ENCODE measurements at regions of chr13 and their contacts with region 1.

Region 1: DNA sequence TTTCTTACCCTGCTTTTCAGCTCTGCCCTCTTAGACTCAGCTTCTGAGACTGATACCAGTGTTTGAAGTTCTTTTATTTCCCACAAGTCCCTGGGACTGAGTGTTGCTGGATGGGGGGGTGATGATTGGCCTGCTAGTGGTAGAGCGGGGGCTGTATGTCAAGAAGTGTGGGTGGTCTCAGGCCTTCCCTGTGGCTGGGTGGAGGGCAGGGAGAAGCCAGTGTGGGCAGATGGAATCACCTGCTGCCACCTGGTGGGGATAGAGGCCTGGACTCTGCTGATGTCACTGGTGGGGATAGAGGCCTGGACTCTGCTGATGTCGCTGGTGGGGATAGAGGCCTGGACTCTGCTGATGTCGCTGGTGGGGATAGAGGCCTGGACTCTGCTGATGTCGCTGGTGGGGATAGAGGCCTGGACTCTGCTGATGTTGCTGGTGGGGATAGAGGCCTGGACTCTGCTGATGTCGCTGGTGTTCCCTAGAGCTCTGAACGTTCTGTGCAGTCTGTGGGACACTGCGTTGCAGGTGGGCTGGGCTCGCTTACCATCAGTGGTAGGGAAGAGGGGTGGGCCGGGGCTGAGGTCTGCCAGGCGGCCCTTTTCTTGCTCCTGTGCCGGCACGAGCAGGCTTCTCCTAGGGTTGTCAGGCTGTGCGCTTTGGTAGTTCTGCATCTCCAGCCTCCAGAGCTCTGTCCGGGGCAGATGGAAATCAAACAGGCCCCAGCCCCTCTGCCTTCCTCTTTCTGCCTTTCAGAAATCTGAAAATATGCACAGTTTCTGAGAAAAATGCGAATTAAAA is 101.3 kb downstream of the ARHGEF7 start:
- DNase-seq: peak in 1 of 3 donors; percentile 57
- ATAC-seq: peak; percentile 26 to 60 (median 52)
- H3K4me3 ChIP-seq: no peak overlapping the region
- H3K27ac ChIP-seq: peak overlapping the region in 2 of 3 donors; percentile 73 to 75
- H3K4me1 ChIP-seq: peaks cover 0 to 24% (median 8%) of the 10 kb centered on the region in 4 donors
- H3K27me3 ChIP-seq: no peaks in the 10 kb centered on the region
- CTCF ChIP-seq: peak; percentile 30 to 46 (median 40)
- POLR2A ChIP-seq: no peak

Region 2: GRCh38 chr13:111066544-111066943 is 149.8 kb before region 1 on chr13:
- intact Hi-C with region 1: loop called in 1 of 2 experiments (anchors 5 kb)
- DNase-seq: no peak
- ATAC-seq: peak; percentile 5 to 29 (median 22)
- H3K4me3 ChIP-seq: peak overlapping the region in 2 of 3 donors; percentile 61 to 63
- H3K27ac ChIP-seq: peak overlapping the region in 2 of 3 donors; percentile 80 to 87
- H3K4me1 ChIP-seq: no peaks in the 10 kb centered on the region
- H3K27me3 ChIP-seq: no peaks in the 10 kb centered on the region
- CTCF ChIP-seq: no peak
- POLR2A ChIP-seq: no peak

Region 3: GRCh38 chr13:111165241-111166010 is 50.9 kb before region 1 on chr13:
- intact Hi-C with region 1: loop called in 1 of 2 experiments (anchors 10 kb)
- DNase-seq: no peak
- ATAC-seq: peak in 1 of 4 donors; percentile 57
- H3K4me3 ChIP-seq: no peak overlapping the region
- H3K27ac ChIP-seq: no peak overlapping the region
- H3K4me1 ChIP-seq: no peaks in the 10 kb centered on the region
- H3K27me3 ChIP-seq: no peaks in the 10 kb centered on the region
- CTCF ChIP-seq: no peak
- POLR2A ChIP-seq: no peak

Region 4: GRCh38 chr13:111474136-111475002 is 258.0 kb after region 1 on chr13:
- intact Hi-C with region 1: no loop called
- DNase-seq: peak in 1 of 3 donors; percentile 44
- ATAC-seq: peak; percentile 77 to 84 (median 82)
- H3K4me3 ChIP-seq: no peak overlapping the region
- H3K27ac ChIP-seq: no peak overlapping the region
- H3K4me1 ChIP-seq: no peaks in the 10 kb centered on the region
- H3K27me3 ChIP-seq: no peaks in the 10 kb centered on the region
- CTCF ChIP-seq: peak; percentile 42 to 69 (median 57)
- POLR2A ChIP-seq: no peak